ENCODE measurements at regions of chr10 and their contacts with region 1.

Region 1: GRCh38 chr10:37976091-37976879 is at the start of gene ZNF25:
- DNase-seq: peak; percentile 99
- ATAC-seq: peak; percentile 98
- total RNA-seq, gene ZNF25: 15.4 to 19.3 TPM

Region 2: GRCh38 chr10:37246639-37247038 is 729.6 kb before region 1 on chr10:
- intact Hi-C with region 1: no loop called
- DNase-seq: no peak
- ATAC-seq: no peak

Region 3: GRCh38 chr10:37937864-37938263 is 38.4 kb before region 1 on chr10:
- intact Hi-C with region 1: no loop called
- DNase-seq: no peak
- ATAC-seq: no peak

Region 4: DNA sequence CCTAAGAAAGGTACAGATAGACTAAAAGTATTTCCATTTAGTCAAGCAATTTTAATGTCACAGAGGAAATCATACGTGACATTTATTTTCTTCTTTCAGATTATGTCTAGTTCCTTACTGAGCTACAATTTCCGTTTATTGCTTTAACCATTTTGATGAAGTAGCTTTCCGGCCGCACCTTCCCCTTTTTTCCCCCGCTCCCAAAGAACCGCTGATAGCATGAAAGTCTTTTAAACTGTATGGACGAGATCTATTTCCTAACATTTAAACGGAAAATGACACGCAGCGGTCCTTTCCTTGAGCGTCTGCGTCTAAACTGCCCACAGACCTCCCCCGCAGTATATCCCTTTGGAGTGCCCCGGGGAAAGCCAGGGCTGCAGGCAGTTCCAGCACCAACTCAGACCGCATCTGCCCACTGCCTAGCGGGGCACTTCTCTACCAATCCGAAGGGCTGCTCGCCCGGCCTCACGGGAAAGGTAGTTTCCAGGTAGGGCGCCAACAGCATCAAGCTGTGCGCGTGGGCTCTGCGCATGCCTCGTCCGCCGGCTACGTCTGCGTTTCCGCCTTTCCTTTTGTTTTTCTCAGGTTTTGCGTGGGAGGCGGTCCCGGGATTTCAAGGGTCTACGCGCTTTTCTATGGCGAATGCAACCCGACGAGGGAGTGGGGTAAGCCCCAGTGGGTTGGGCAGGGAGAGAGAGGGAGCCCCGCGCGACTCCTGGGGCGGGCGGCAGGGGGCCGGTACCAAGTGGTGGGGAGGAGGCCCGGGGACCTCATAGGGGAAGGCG is 34.0 kb after region 1 on chr10 and contains the start of gene ZNF33A:
- intact Hi-C with region 1: loop called in 1 of 2 experiments (anchors 1 kb)
- DNase-seq: peak; percentile 94
- ATAC-seq: peak; percentile 96 to 98
- total RNA-seq, gene ZNF33A: 16.8 to 22.7 TPM

Region 5: GRCh38 chr10:38094158-38094920 is 118.1 kb after region 1 on chr10 and contains the start of gene ZNF37A:
- intact Hi-C with region 1: loop called in 1 of 2 experiments (anchors 10 kb)
- DNase-seq: peak; percentile 96
- ATAC-seq: peak; percentile 99 to 100
- total RNA-seq, gene ZNF37A: 8.1 to 9.2 TPM

Measured in left cardiac atrium (tissue), 4 donors.